ENCODE measurements at regions of chr2 and their contacts with region 1.

Region 1: GRCh38 chr2:53715568-53715967 is 52.0 kb upstream of the CHAC2 start:
- DNase-seq: no peak
- CTCF ChIP-seq: peak; percentile 46

Region 2: DNA sequence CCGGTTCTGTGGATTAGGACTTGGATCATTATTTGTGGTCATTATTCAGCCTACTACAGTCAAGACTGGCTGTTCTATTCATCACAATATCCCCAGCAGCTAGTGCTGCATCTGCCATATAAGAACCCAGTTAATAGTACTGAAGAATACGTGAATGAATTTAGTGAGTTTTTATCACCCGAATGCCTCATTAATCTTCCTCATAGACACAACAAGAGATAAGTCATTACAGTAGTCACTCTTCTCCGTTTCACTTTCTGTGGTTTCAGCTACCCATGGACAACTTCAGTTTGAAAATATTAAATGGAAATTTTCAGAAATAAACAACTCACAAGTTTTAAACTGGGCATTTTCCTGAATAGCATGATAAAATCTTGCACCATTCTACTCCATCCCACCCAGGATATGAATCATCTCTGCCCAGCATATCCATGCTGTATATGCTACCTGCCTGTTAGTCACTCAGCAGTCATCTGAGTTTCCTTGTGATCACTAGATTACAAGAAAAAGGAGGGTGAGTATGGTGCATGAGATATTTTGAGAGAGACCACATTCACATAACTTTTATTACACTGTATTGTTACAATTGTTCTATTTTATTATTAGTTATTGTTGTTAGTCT is 311.7 kb before region 1 on chr2:
- in situ Hi-C with region 1: no loop called
- DNase-seq: no peak
- CTCF ChIP-seq: no peak

Region 3: GRCh38 chr2:53445386-53446072 is 270.0 kb before region 1 on chr2:
- in situ Hi-C with region 1: loop called (anchors 25 kb)
- DNase-seq: peak; percentile 6
- CTCF ChIP-seq: no peak

Region 4: GRCh38 chr2:54084600-54084999 is 369.0 kb after region 1 on chr2:
- in situ Hi-C with region 1: no loop called
- DNase-seq: no peak
- CTCF ChIP-seq: peak; percentile 31

Measured in GM13977 (cell line).